Activated naive CD4-positive, alpha-beta T cell treated with anti-CD3 and anti-CD28 coated beads for 36 hours (primary cell): ENCODE measurements at regions of chr10 and their contacts with region 1.

Region 1: DNA sequence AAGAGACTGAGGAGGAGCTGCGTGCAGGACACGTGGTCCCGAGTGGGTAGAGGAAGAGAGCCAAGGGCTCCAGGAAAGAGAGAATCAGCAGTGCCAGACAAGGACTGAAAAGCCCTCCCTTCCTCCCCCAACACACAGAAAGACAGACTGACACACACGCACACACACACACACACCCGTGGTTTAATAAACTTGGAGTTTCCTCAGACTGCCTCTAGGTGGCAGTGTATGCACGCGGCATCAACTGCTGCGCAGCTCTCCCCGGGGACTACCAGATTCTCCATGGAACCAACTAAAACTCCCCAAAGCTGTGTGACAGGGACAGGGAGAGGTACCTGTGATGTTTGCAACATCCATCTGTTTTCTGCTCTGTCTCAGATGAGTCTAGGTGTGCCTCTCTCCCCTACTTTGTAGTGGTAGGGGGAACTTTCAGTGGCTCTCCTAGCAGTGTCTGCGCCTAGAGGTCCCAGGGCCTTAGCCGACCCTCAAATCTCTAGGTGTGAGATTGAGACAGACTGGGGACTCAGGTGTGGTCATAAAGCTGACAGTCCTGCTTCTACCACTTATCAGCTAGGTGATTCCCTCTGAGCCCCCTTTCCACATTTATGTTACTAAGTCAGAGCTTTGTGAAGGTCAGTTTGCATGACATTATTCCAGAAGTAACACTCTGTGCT is 9.3 kb upstream of the TSPAN14 start:
- DNase-seq: peak; percentile 82
- H3K4me3 Mint-ChIP-seq: no peak overlapping the region
- H3K27ac Mint-ChIP-seq: peak overlapping the region; percentile 61
- H3K4me1 Mint-ChIP-seq: peaks cover 59% of the 10 kb centered on the region
- H3K27me3 Mint-ChIP-seq: no peaks in the 10 kb centered on the region

Region 2: GRCh38 chr10:79904671-79905321 is 540.0 kb before region 1 on chr10:
- CTCF ChIA-PET with region 1: no interaction called
- intact Hi-C with region 1: no loop called
- DNase-seq: peak; percentile 71
- H3K4me3 Mint-ChIP-seq: peak overlapping the region; percentile 87
- H3K27ac Mint-ChIP-seq: no peak overlapping the region
- H3K4me1 Mint-ChIP-seq: peaks cover 17% of the 10 kb centered on the region
- H3K27me3 Mint-ChIP-seq: peaks cover 24% of the 10 kb centered on the region

Region 3: GRCh38 chr10:80382989-80383388 is 61.8 kb before region 1 on chr10:
- CTCF ChIA-PET with region 1: interaction called, 35 read pairs
- intact Hi-C with region 1: loop called (anchors 1 kb)
- DNase-seq: peak; percentile 73
- H3K4me3 Mint-ChIP-seq: no peak overlapping the region
- H3K27ac Mint-ChIP-seq: no peak overlapping the region
- H3K4me1 Mint-ChIP-seq: peaks cover 16% of the 10 kb centered on the region
- H3K27me3 Mint-ChIP-seq: no peaks in the 10 kb centered on the region

Region 4: DNA sequence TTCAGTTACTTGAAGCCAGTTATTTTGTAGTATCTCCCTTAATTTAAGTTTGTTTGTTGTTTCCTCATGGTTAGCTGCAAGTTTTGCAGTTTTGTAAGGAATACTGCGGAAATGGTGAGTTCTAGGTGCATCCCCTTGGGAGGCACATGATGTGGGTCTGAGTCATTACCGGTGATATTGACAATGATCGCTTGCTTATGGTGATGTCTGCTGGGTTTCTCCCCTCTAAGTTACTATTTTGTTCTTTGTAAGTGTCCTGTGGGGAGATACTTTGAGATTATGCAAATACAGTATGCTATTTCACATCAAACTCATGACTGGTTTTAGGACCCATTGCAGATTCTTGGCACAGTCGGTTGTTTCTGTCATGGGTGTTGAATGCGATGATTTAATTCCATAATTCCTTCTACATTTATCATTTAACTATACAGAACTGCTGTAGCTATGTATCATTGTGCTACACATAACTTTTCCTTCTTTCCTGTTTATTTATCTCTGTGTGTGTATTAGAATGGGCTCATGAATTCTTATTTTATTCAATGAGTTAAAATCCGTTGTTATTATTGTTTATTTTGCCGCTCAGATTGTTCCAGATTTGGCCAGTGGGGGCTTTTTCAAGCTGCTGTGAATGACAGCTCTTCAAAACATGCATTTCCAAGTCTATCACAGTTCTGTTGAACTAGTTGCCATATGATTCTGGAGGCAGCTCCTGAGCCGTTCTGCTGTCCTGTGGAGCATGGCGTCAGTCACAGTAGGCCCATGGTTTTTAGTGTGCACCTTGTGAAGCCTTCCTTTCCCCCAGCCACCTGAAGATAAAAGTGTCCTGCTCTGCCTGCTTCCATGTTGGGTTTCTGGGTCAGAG is 27.7 kb after region 1 on chr10:
- CTCF ChIA-PET with region 1: interaction called, 13 read pairs
- intact Hi-C with region 1: loop called (anchors 1 kb)
- DNase-seq: peak; percentile 75
- H3K4me3 Mint-ChIP-seq: peak overlapping the region; percentile 36
- H3K27ac Mint-ChIP-seq: peak overlapping the region; percentile 98
- H3K4me1 Mint-ChIP-seq: peaks cover 87% of the 10 kb centered on the region
- H3K27me3 Mint-ChIP-seq: no peaks in the 10 kb centered on the region

Region 5: DNA sequence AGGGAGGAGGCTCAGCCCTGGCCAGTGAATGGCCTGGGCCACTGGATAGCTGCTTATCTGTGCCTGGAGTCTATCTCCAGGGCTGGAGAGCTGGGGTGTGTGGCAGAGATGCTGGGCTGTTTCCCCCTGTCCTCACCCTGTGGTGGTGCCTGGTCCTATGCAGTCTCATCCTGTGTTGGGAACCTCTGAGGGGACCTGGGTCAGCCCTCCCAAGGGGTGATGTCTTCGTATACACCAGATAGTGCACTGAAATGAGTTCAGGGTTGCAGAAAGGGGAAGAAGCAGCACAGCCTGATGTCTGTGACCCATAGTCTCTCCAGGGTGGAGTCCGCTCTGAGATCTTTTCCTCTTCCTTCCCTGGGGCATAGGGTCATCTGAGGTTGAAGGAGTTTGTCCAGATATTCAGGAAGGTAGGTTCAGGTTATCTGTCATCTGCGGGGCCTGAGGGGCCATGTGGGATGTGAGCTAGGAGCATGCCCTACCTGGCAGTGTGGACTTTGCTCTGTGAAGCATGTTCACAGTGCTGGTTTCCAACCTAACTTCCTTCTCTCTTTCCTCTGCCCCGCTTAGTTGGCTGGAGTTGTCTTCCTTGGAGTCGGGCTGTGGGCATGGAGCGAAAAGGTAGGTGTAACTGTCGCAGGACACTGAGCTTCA is 59.5 kb after region 1 on chr10:
- CTCF ChIA-PET with region 1: interaction called, 916 read pairs
- intact Hi-C with region 1: loop called (anchors 1 kb)
- DNase-seq: no peak
- H3K4me3 Mint-ChIP-seq: no peak overlapping the region
- H3K27ac Mint-ChIP-seq: peak overlapping the region; percentile 54
- H3K4me1 Mint-ChIP-seq: peaks cover 64% of the 10 kb centered on the region
- H3K27me3 Mint-ChIP-seq: no peaks in the 10 kb centered on the region

Region 6: GRCh38 chr10:80599424-80599847 is 154.7 kb after region 1 on chr10:
- CTCF ChIA-PET with region 1: interaction called, 29 read pairs
- intact Hi-C with region 1: loop called (anchors 2 kb)
- DNase-seq: peak; percentile 58
- H3K4me3 Mint-ChIP-seq: no peak overlapping the region
- H3K27ac Mint-ChIP-seq: no peak overlapping the region
- H3K4me1 Mint-ChIP-seq: no peaks in the 10 kb centered on the region
- H3K27me3 Mint-ChIP-seq: no peaks in the 10 kb centered on the region

Region 7: GRCh38 chr10:80632742-80633141 is 188.0 kb after region 1 on chr10:
- CTCF ChIA-PET with region 1: no interaction called
- intact Hi-C with region 1: no loop called
- DNase-seq: no peak
- H3K4me3 Mint-ChIP-seq: no peak overlapping the region
- H3K27ac Mint-ChIP-seq: no peak overlapping the region
- H3K4me1 Mint-ChIP-seq: no peaks in the 10 kb centered on the region
- H3K27me3 Mint-ChIP-seq: peaks cover 5% of the 10 kb centered on the region

Region 8: GRCh38 chr10:80924063-80924952 is 479.5 kb after region 1 on chr10:
- CTCF ChIA-PET with region 1: interaction called, 13 read pairs
- intact Hi-C with region 1: loop called (anchors 1 kb)
- DNase-seq: peak; percentile 42
- H3K4me3 Mint-ChIP-seq: no peak overlapping the region
- H3K27ac Mint-ChIP-seq: no peak overlapping the region
- H3K4me1 Mint-ChIP-seq: no peaks in the 10 kb centered on the region
- H3K27me3 Mint-ChIP-seq: peaks cover 12% of the 10 kb centered on the region

Region 9: GRCh38 chr10:80945264-80945880 is 500.6 kb after region 1 on chr10:
- CTCF ChIA-PET with region 1: no interaction called
- intact Hi-C with region 1: no loop called
- DNase-seq: no peak
- H3K4me3 Mint-ChIP-seq: no peak overlapping the region
- H3K27ac Mint-ChIP-seq: no peak overlapping the region
- H3K4me1 Mint-ChIP-seq: no peaks in the 10 kb centered on the region
- H3K27me3 Mint-ChIP-seq: peaks cover 5% of the 10 kb centered on the region